GM10248 (cell line): ENCODE measurements at regions of chr3 and their contacts with region 1.

Region 1: DNA sequence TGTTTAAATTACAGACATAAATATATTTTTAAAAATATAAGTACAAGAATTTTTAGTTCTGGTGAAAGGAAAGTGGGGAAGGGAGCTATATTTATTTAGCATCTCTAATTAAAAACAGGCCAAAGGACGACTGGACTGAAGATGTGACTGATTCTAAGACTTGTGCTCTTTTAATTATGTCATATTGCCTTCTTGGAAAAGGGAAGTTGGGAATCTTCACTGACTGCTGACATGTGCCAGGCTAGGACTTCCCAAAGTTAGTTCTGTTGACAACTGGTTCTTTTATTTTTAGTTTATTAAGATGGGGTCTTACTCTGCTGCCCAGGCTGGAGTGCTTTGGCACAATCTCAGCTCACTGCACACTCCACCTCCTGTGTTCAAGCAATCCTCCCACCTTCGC is 13.5 kb downstream of the CNOT10 start:
- DNase-seq: no peak
- CTCF ChIP-seq: no peak

Region 2: GRCh38 chr3:32684800-32685542 is 13.5 kb before region 1 on chr3 and contains the start of gene CNOT10:
- CTCF ChIA-PET with region 1: interaction called, 13 read pairs
- POLR2A ChIA-PET with region 1: no interaction called
- DNase-seq: peak; percentile 96
- CTCF ChIP-seq: peak; percentile 0